Activated CD4-positive, alpha-beta T cell treated with anti-CD3 and anti-CD28 coated beads, Interleukin-2, amount 10 ng/mL, durations not matched to agents 24 days and 14 days (primary cell): ENCODE measurements at regions of chr2 and their contacts with region 1.

Region 1: DNA sequence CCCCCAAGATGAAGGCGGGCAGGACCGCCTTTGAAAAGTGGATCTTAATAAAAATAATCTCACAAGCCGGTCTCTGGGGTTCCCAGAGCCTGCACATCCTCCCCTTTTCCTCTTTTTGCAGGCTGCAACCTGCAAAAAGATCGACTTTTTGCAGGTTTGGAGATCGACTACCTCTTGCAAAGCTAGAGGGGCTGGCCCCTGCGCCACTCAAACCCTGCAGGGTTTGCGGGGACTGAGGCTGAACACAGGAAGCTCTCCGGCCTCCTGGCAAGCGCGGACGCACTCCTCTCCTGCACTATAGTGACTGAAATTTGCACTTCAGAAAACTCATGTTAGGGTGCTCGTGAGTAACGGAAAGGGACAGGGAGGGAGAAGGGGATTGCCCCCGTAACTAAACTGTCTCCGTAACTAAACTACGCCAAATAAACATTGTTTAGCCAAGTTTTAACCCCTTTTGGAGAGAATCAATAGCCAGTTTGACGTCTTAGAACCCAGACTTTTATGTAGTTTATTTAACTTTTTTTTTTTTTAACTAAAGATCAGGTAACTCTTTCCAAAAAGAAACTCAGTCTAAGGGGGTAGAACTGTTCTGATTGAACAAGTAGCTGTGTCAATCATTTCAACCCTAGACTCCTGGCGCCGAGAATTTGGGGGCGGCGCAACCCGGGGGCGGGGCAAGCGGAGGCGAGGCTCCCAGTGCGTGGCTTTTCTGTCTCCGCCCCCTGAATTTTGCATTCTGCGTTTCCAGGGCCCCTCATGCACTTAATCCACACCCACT is 2.5 kb downstream of the IGFBP5 start:
- DNase-seq: peak; percentile 93
- H3K4me3 Mint-ChIP-seq: peak overlapping the region; percentile 89
- H3K27ac Mint-ChIP-seq: peak overlapping the region; percentile 75
- H3K4me1 Mint-ChIP-seq: peaks cover 21% of the 10 kb centered on the region
- H3K27me3 Mint-ChIP-seq: peaks cover 65% of the 10 kb centered on the region

Region 2: DNA sequence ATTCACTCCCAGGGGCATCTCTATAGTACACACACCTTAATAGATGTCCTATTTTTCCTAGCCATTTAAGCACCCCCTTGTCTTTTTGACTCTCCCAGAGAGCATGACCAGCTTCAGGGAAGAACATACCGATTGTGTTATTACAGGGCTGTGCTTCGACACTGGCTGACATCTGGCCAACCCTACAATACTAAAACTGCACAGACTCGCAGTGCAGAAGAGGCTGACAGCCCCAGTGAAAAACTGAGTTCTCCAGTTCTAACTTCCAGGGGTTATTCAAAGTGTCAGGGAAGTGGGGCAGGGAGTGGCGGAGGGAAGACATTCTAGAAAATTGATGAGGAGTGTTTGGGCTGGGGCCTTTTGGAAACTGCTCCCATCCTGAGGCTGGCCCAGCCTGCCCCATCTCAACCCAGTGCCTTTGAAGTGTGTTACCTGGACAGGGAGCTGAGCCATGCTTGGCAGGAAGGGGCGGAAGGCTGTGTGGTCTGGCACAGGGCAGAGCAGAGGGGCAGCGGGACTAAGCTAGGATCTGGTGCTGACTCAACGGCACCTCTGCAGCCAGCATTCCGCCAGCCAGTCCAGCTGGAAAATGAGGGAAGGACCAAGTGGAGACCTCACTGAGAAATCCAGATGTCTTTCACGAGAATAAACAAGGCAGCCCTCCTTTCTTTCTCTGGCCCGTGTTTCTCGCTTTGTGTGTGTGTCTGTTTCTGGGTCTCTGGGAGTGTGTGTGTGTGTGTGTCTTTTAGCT is 17.9 kb after region 1 on chr2:
- intact Hi-C with region 1: no loop called
- DNase-seq: no peak
- H3K4me3 Mint-ChIP-seq: no peak overlapping the region
- H3K27ac Mint-ChIP-seq: no peak overlapping the region
- H3K4me1 Mint-ChIP-seq: no peaks in the 10 kb centered on the region
- H3K27me3 Mint-ChIP-seq: peaks cover 2% of the 10 kb centered on the region

Region 3: DNA sequence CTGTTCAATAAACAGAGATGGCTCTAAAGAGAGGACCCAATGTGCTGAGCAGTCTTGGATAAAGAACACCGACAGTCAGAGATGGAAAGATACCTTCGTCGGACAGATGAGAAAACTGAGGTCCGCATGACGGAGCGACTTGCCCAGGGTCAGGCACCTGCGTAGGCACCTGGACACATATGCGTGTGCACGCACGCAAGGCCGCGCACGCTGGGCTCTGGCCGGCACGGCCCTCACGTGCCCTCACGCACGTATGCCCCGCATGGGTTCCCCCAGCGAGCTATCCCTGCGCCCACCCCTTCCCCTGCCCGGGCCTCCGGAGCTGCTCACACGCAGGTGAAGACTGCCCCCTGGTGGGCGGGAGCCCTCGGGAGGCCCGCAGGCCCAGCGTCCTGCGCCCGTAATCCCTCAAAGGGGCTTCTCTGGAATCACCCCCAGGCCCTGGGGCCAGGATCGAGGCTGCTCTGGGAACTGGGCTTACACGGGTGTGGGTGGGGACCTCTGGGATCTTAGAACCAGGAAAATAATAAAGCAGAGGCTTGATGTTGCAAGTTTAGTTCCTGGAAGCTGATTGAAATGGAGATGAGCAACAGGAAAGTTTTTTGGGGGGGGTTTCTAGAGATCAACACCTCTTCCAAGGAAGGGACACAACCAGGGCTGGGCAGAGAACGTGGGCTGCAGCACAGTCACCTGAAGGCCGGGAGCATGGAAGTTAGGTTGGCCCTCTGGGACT is 1063.7 kb after region 1 on chr2:
- intact Hi-C with region 1: loop called (anchors 5 kb)
- DNase-seq: peak; percentile 89
- H3K4me3 Mint-ChIP-seq: peak overlapping the region; percentile 45
- H3K27ac Mint-ChIP-seq: peak overlapping the region; percentile 83
- H3K4me1 Mint-ChIP-seq: peaks cover 21% of the 10 kb centered on the region
- H3K27me3 Mint-ChIP-seq: peaks cover 3% of the 10 kb centered on the region